ENCODE measurements at regions of chr2 and their contacts with region 1.

Region 1: GRCh38 chr2:169452080-169452479 is 27.2 kb upstream of the BBS5 start:
- DNase-seq: peak; percentile 51 to 78 (median 58)
- ATAC-seq: peak; percentile 97
- H3K4me3 ChIP-seq: no peak overlapping the region
- H3K27ac ChIP-seq: no peak overlapping the region
- H3K4me1 ChIP-seq: no peaks in the 10 kb centered on the region; a peak in 1 of 5 replicates
- H3K27me3 ChIP-seq: no peaks in the 10 kb centered on the region
- CTCF ChIP-seq: peak; percentile 34 to 76 (median 49); a peak in 4 of 6 replicates
- EP300 ChIP-seq: no peak
- POLR2A ChIP-seq: no peak
- RAD21 ChIP-seq: peak; percentile 57 to 71

Region 2: GRCh38 chr2:169520896-169521295 is 68.8 kb after region 1 on chr2:
- CTCF ChIA-PET with region 1: no interaction called
- POLR2A ChIA-PET with region 1: no interaction called
- in situ Hi-C with region 1: no loop called
- intact Hi-C with region 1: loop called (anchors 2 kb)
- DNase-seq: no peak
- ATAC-seq: no peak
- H3K4me3 ChIP-seq: no peak overlapping the region
- H3K27ac ChIP-seq: no peak overlapping the region
- H3K4me1 ChIP-seq: peaks cover 0 to 4% of the 10 kb centered on the region in 2 experiments; a peak in 1 of 5 replicates
- H3K27me3 ChIP-seq: no peaks in the 10 kb centered on the region
- CTCF ChIP-seq: no peak
- EP300 ChIP-seq: no peak
- POLR2A ChIP-seq: no peak
- RAD21 ChIP-seq: no peak

Region 3: DNA sequence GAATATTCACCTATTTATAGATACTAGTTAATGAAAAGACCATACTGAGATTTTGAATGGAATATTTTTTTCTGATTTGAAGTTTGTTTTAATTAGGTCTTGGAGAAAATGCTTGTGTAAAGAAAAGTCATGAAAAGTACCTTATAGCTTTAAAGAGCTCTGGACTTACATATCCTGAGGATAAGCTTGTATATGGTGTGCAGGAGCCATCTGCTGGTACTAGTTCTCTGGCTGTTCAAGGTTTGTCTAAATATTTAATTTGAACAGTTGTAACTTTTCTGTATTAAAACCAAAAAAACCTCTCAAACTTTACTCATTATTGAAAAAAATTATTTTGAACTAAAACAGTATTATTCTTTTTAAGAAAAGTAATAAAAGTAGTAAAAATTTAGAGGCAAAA is 425.3 kb after region 1 on chr2:
- CTCF ChIA-PET with region 1: interaction called, 5 read pairs
- POLR2A ChIA-PET with region 1: no interaction called
- in situ Hi-C with region 1: no loop called
- intact Hi-C with region 1: loop called (anchors 2 kb)
- DNase-seq: peak in 1 of 4 experiments; percentile 59
- ATAC-seq: peak; percentile 86
- H3K4me3 ChIP-seq: no peak overlapping the region
- H3K27ac ChIP-seq: no peak overlapping the region
- H3K4me1 ChIP-seq: no peaks in the 10 kb centered on the region
- H3K27me3 ChIP-seq: no peaks in the 10 kb centered on the region
- CTCF ChIP-seq: peak; percentile 53 to 79 (median 68); a peak in 5 of 6 replicates
- EP300 ChIP-seq: no peak
- POLR2A ChIP-seq: no peak
- RAD21 ChIP-seq: peak; percentile 71 to 91